ENCODE measurements at regions of chr2 and their contacts with region 1.

Region 1: DNA sequence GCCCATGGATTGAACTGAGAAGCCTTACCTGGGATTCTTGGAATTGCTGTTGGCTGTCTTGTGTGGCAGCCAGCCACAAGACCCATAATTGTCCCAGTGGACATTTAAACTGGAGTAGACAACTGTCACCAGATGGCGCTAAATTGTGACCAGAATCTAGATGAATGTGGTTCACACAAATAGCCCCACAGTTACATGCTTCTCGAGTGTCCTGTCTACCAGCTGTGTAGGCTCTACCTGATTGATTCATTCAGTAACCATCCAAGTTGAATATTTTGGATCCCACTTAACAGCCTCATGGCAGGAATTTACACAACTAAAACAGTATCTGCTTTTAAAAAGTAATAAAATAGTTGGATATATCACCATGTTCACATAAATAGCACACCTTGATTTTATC is 73.2 kb downstream of the MAP4K4 start:
- DNase-seq: peak; percentile 63
- H3K4me3 Mint-ChIP-seq: no peak overlapping the region
- H3K27ac Mint-ChIP-seq: peak overlapping the region; percentile 36
- H3K4me1 Mint-ChIP-seq: peaks cover 57% of the 10 kb centered on the region
- H3K27me3 Mint-ChIP-seq: no peaks in the 10 kb centered on the region
- CTCF ChIP-seq: peak; percentile 33

Region 2: DNA sequence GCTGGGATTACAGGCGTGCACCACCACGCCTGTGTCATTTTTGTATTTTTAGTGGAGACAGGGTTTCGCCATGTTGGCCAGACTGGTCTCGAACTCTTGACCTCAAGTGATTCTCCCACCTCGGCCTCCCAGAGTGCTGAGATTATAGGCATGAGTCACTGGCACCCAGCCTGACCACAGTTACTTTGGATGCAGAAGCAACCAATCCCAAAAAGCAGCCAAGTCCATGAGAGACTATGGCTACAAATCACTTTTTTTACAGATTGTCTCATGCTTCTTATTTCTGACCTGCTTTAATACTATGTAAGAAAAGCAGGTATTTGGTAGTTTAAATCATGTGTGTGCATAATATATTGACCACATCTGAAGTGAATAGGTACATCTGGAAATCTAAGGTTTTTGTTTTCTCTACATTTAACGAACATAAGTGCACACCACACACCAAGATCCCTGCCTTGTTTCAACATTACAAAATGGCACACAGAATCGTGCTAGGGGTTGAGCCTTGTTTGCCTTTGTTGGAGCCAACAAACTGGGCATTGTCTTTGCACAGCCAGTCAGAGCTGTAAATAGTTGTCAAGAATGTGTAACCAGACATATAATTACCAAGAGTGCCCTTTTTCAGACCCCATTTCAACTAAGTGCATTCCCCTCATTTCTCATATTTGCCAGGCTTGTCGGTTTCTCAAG is 91.5 kb before region 1 on chr2:
- CTCF ChIA-PET with region 1: no interaction called
- POLR2A ChIA-PET with region 1: no interaction called
- intact Hi-C with region 1: no loop called
- DNase-seq: peak; percentile 47
- H3K4me3 Mint-ChIP-seq: no peak overlapping the region
- H3K27ac Mint-ChIP-seq: no peak overlapping the region
- H3K4me1 Mint-ChIP-seq: no peaks in the 10 kb centered on the region
- H3K27me3 Mint-ChIP-seq: no peaks in the 10 kb centered on the region
- CTCF ChIP-seq: no peak

Region 3: DNA sequence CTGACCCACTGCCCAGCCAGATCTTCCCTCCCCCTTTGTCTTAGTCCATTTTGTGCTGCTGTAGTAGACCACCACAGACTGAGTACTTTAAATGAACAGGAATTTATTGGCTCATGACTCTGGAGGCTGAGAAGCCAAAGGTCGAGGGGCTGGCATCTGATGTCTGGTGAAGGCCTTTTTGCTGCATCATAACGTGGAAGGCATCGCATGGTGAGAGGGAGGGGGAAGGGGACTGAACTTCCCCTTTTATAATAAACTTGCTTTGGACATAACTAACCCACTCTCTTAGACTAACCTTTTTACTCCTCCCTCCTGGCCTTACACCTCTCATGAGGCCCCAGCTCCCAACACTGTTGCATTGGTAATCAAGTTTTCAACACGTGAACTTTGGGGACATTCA is 10.6 kb after region 1 on chr2:
- CTCF ChIA-PET with region 1: interaction called, 22 read pairs
- POLR2A ChIA-PET with region 1: interaction called, 10 read pairs
- intact Hi-C with region 1: no loop called
- DNase-seq: no peak
- H3K4me3 Mint-ChIP-seq: no peak overlapping the region
- H3K27ac Mint-ChIP-seq: no peak overlapping the region
- H3K4me1 Mint-ChIP-seq: peaks cover 27% of the 10 kb centered on the region
- H3K27me3 Mint-ChIP-seq: no peaks in the 10 kb centered on the region
- CTCF ChIP-seq: no peak